ENCODE measurements at regions of chr5 and their contacts with region 1.

Region 1: GRCh38 chr5:117667105-117667504 is 1092.5 kb upstream of the SEMA6A start:
- DNase-seq: no peak
- H3K4me3 ChIP-seq: no peak overlapping the region
- H3K27ac ChIP-seq: no peak overlapping the region
- H3K4me1 ChIP-seq: no peaks in the 10 kb centered on the region
- H3K27me3 ChIP-seq: no peaks in the 10 kb centered on the region
- CTCF ChIP-seq: no peak
- EP300 ChIP-seq: no peak
- POLR2A ChIP-seq: no peak

Region 2: DNA sequence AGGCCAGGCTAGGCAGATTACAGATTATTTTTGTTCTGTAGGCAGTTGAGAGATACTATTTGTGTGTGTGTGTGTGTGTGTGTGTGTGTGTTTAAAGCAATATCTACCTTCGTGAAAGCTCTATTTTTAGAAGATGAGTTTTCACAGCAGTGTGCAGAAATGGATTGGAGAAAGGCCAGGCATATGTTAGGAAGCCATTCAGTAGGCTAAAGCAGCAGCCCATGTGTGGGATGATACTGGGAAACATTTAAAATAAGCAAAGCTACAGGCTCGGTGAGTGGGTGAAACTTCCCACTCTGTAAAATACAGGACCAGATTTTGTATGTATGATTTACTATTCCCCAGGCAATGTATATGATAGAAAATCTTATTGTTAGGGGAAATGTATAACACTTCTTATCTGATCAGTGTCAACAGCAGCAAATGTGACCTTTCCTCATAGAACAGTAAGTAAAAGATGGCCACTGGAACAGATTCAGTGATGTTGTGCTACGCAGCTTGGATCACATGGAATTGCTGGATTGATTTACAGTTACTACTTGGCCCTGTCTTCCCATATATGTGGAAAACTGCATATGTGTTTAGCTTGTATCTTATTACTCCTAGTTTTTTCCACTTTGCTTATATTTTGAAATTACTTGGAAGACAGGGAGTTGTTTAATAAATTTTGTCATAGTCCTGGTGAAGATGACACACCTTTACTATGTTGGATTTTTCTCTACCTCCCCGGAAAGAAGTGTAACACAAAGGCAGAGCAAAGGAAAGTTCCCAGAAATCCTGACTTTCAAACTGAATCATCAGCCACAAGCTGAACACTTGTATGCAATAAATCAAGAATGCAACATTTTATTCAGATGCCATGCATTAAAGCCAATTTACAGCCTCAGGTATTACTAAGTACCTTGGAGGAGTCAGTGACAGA is 14.8 kb before region 1 on chr5:
- in situ Hi-C with region 1: no loop called
- intact Hi-C with region 1: loop called (anchors 1 kb)
- DNase-seq: no peak
- H3K4me3 ChIP-seq: no peak overlapping the region
- H3K27ac ChIP-seq: no peak overlapping the region
- H3K4me1 ChIP-seq: no peaks in the 10 kb centered on the region
- H3K27me3 ChIP-seq: no peaks in the 10 kb centered on the region
- CTCF ChIP-seq: no peak
- EP300 ChIP-seq: no peak
- POLR2A ChIP-seq: no peak

Region 3: DNA sequence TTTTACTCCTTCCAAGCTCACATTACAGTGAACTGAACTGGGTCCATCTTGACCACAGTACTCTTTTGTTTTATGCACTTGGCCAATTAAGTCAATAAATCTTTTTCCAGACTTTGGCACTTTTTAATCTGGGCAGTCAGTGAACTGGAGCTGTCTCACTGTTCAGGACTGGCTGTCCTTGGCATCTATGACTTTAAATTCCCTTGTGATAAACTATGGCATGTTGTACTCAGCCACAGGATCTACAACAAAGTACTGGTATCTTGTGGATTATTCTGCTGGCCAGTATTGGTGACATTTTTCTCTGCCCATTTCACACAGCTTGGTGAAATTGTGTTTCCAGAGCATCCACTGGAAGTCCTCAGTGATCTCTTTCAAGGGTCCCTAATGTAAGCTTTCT is 52.3 kb after region 1 on chr5:
- in situ Hi-C with region 1: no loop called
- intact Hi-C with region 1: no loop called
- DNase-seq: no peak
- H3K4me3 ChIP-seq: no peak overlapping the region
- H3K27ac ChIP-seq: no peak overlapping the region
- H3K4me1 ChIP-seq: no peaks in the 10 kb centered on the region
- H3K27me3 ChIP-seq: no peaks in the 10 kb centered on the region
- CTCF ChIP-seq: no peak
- EP300 ChIP-seq: no peak
- POLR2A ChIP-seq: no peak

Measured in transverse colon (tissue), 4 donors.